ENCODE measurements at regions of chr1 and their contacts with region 1.

Region 1: DNA sequence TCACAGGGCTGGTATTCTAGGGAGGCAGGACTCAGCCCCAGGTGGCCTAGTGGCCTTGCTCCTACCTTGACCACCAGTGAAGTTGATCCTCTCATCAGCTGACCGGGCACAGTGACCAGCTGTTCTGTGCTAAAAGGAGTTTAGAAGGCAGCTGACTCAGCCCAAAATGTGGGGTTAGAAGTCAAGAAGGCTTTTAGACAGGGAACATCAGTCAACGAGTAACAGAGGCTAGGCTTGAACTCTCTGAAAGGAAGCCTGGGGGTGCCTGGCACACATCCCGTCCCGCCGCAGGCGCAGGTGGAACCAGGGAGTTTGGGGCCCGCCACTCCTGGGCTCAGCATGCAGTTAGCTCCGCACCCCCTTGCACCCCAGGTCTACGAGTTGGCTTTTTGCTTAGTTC is 114.9 kb upstream of the SLC45A1 start:
- DNase-seq: no peak
- H3K4me3 Mint-ChIP-seq: no peak overlapping the region
- H3K27ac Mint-ChIP-seq: peak overlapping the region; percentile 91
- H3K4me1 Mint-ChIP-seq: peaks cover 47% of the 10 kb centered on the region
- H3K27me3 Mint-ChIP-seq: no peaks in the 10 kb centered on the region
- CTCF ChIP-seq: no peak

Region 2: DNA sequence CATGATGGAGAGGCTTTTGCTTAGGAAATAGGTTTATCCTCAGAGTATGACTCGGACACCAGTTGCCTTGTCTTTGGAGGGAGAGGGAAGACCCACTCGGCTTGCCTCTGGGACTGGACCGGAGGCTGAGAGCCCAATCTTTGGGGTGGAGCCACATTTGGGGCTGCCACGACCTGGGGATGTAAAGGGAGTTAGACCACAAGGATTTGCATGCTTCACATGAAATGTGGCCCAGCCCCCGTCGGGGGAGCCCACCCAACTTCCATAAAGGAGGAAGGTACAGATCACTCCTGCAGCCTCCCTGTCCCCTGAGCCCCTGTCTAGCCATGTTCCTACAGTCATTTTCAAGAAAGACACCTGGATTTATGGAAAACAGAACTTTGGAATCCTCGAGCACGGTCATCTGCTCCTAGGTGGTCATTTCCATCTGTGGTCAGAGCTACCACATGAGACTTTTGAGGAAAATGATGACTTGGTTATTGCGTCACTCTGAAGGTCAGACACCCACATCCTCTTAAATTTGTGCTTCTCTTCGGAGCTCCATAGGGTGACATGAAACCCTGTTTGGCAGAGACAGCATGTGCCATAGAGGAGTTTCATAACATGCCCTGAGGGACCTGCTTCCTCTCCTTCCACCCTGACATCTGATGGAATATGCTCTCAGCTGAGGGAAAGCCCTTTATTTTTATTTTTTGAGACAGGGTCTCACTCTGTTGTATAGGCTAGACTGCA is 15.5 kb after region 1 on chr1:
- CTCF ChIA-PET with region 1: interaction called, 3 read pairs
- POLR2A ChIA-PET with region 1: interaction called, 16 read pairs
- intact Hi-C with region 1: no loop called
- DNase-seq: peak; percentile 83
- H3K4me3 Mint-ChIP-seq: no peak overlapping the region
- H3K27ac Mint-ChIP-seq: no peak overlapping the region
- H3K4me1 Mint-ChIP-seq: peaks cover 20% of the 10 kb centered on the region
- H3K27me3 Mint-ChIP-seq: no peaks in the 10 kb centered on the region
- CTCF ChIP-seq: no peak

Region 3: DNA sequence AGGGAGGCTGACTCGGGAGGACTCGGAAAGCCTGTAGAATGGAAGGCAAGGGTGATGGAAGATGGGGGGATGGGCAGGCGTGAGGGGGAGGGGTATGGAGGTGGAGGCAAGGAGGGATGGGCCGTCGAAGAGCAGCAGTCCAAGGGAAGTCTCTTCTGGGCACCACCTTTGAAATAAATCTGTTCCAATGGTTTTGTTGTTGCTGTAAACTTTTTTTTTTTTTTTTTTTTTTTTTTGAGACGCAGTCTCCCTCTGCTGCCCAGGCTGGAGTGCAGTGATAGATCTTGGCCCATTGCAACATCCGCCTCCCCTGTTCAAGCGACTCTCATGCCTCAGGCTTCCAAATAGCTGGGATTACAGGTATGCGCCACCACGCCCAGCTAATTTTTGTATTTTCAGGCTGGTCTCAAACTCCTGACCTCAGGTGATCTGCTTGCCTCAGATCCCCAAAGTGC is 35.8 kb after region 1 on chr1:
- CTCF ChIA-PET with region 1: interaction called, 16 read pairs
- POLR2A ChIA-PET with region 1: interaction called, 4 read pairs
- intact Hi-C with region 1: no loop called
- DNase-seq: peak; percentile 88
- H3K4me3 Mint-ChIP-seq: no peak overlapping the region
- H3K27ac Mint-ChIP-seq: peak overlapping the region; percentile 86
- H3K4me1 Mint-ChIP-seq: peaks cover 14% of the 10 kb centered on the region
- H3K27me3 Mint-ChIP-seq: no peaks in the 10 kb centered on the region
- CTCF ChIP-seq: peak; percentile 37

Region 4: DNA sequence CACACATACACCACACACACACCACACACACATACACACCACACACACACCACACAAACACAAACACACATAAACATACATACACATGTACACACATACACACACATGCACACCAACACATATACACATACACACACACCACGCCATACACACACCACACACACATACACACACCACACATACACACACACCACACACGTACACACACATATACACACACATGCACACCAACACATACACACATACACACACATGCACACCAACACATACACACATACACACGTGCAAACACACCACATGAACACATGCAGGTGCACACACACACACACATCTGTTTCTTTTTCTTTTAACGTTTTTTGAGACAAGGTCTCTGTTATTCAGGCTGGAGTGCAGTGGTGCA is 73.9 kb after region 1 on chr1:
- CTCF ChIA-PET with region 1: no interaction called
- POLR2A ChIA-PET with region 1: no interaction called
- intact Hi-C with region 1: no loop called
- DNase-seq: no peak
- H3K4me3 Mint-ChIP-seq: no peak overlapping the region
- H3K27ac Mint-ChIP-seq: no peak overlapping the region
- H3K4me1 Mint-ChIP-seq: no peaks in the 10 kb centered on the region
- H3K27me3 Mint-ChIP-seq: peaks cover 4% of the 10 kb centered on the region
- CTCF ChIP-seq: no peak

Measured in MCF 10A (cell line).